Brain microvascular endothelial cell (primary cell): ENCODE measurements at regions of chr9 and their contacts with region 1.

Region 1: GRCh38 chr9:137034863-137035761 is 3.2 kb upstream of the FUT7 start:
- DNase-seq: peak; percentile 68
- H3K4me3 ChIP-seq: no peak overlapping the region
- H3K27ac ChIP-seq: no peak overlapping the region
- H3K27me3 ChIP-seq: no peaks in the 10 kb centered on the region
- CTCF ChIP-seq: peak; percentile 98

Region 2: GRCh38 chr9:136807281-136808074 is 227.6 kb before region 1 on chr9 and contains the start of gene RABL6:
- in situ Hi-C with region 1: loop called (anchors 25 kb)
- DNase-seq: peak; percentile 35
- H3K4me3 ChIP-seq: peak within 1 kb of the TSS; percentile 81
- H3K27ac ChIP-seq: peak within 1 kb of the TSS; percentile 11
- H3K27me3 ChIP-seq: no peaks in the 10 kb centered on the region
- CTCF ChIP-seq: no peak

Region 3: GRCh38 chr9:136944519-136945279 is 90.4 kb before region 1 on chr9 and contains the starts of genes C8G and FBXW5:
- in situ Hi-C with region 1: loop called (anchors 25 kb)
- DNase-seq: peak; percentile 75
- H3K4me3 ChIP-seq: peak within 1 kb of the TSS; percentile 76
- H3K27ac ChIP-seq: peak within 1 kb of the TSS; percentile 75
- H3K27me3 ChIP-seq: no peaks in the 10 kb centered on the region
- CTCF ChIP-seq: peak; percentile 76